ENCODE measurements at regions of chr13 and their contacts with region 1.

Region 1: GRCh38 chr13:40682449-40683240 is 16.2 kb upstream of the FOXO1 start:
- DNase-seq: no peak
- H3K4me3 ChIP-seq: no peak overlapping the region
- H3K27ac ChIP-seq: no peak overlapping the region
- H3K4me1 ChIP-seq: no peaks in the 10 kb centered on the region
- H3K27me3 ChIP-seq: no peaks in the 10 kb centered on the region
- CTCF ChIP-seq: peak; percentile 56

Region 2: DNA sequence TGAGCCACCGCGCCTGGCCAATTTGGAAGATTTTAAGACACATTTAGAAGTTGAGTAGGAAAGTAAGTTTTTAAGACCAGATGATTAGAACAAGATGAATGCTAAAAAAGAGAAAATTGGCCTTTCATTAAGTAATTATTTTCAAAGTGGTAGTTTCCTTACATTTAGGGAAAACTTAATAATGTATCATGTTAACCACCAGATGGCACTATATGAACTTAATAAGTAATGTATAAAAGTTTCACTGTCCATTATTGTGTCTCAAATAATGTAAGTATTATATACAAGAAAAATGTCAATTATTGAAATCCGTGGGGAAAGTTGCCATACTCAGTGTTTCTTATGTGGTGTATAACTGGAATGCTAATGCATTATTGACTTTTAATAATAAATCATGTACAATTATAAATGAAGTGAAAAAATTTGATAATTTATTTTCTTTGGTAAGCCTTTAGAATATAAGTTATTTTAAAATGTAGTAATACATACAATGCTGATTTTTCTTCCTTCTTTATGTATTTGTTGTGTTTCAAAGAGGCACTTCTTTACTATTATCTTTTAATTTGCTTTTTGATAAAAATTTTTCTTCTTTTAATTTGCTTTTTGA is 998.0 kb before region 1 on chr13:
- intact Hi-C with region 1: loop called (anchors 10 kb)
- DNase-seq: no peak
- H3K4me3 ChIP-seq: no peak overlapping the region
- H3K27ac ChIP-seq: no peak overlapping the region
- H3K4me1 ChIP-seq: no peaks in the 10 kb centered on the region
- H3K27me3 ChIP-seq: no peaks in the 10 kb centered on the region
- CTCF ChIP-seq: no peak

Region 3: DNA sequence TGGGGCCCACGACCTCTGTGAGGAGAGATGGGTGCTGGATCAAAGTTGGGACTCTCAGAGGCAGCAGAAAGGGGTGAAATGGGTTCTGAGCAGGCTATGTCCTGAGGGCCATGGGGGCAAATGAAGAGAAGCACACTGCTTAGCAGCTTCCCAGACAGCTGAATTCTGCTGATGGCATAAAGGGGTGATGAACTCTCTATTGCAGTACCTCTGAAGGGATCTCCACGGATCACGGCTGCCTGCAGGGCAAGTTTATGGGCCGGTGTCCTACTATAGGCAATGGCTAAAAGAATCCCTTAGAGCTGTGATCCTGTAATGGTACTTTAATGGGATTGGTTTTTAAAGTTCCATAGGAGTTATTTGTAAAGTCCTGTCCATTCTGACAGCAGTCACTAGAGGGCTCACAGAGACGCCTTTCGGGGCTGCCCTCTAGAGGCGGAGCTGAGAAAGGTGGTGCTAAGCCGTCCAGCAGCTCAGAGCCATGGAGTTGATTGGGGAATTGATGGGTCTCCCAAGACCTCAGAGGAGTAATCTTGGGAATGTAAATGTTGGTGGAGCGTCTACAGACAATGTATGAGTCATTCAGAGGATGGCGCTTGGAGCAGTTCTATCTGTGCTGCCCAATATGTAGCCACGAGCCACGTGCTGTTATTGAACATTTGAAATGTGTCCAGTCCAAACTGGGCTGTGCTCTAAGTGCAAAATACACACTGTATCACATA is 739.9 kb before region 1 on chr13:
- intact Hi-C with region 1: loop called (anchors 5 kb)
- DNase-seq: peak; percentile 59
- H3K4me3 ChIP-seq: no peak overlapping the region
- H3K27ac ChIP-seq: no peak overlapping the region
- H3K4me1 ChIP-seq: no peaks in the 10 kb centered on the region
- H3K27me3 ChIP-seq: no peaks in the 10 kb centered on the region
- CTCF ChIP-seq: peak; percentile 90

Region 4: DNA sequence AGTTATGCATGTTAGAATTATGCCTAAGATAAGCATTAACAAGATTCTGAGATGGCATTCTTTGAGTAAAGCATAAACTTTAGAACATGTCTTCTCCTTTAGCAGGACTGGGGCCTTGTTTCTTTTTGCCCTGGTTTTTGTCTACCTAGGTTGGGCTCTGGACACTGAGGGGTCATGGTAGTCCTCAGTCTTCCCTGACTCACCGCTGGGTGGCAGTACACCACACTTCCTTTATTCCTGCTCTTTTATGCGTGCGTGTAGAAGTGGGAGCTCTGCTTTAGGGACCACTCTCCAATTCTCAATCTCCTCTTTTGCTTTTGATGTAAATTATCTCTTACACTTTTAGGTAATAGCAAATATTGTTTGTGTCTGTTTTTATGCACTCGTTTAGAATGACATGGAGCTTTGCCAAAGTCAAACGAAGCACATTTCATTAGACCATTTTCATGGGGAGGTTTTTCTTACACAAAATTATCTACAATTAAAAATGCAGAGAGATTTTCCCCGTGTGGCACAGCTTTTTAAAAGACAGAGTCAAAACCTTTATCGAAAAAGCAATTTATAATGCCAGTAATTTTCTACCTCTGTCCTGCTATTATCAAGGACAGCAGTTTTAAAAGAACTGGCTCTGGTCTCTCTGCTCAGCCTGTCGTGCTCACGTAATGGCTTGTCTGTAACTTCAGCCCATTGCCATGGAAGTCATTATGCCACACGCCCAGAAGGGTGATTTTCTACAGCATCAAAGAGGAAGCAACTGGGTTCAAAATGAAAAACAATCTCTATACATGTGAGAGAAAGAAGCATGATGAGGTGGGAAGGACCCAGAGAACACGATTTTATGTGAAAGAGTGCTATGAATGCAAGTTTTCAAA is 613.2 kb before region 1 on chr13:
- intact Hi-C with region 1: loop called (anchors 2 kb)
- DNase-seq: peak; percentile 76
- H3K4me3 ChIP-seq: no peak overlapping the region
- H3K27ac ChIP-seq: no peak overlapping the region
- H3K4me1 ChIP-seq: no peaks in the 10 kb centered on the region
- H3K27me3 ChIP-seq: no peaks in the 10 kb centered on the region
- CTCF ChIP-seq: peak; percentile 74

Region 5: GRCh38 chr13:40344270-40345148 is 338.1 kb before region 1 on chr13:
- intact Hi-C with region 1: no loop called
- DNase-seq: no peak
- H3K4me3 ChIP-seq: no peak overlapping the region
- H3K27ac ChIP-seq: no peak overlapping the region
- H3K4me1 ChIP-seq: no peaks in the 10 kb centered on the region
- H3K27me3 ChIP-seq: no peaks in the 10 kb centered on the region
- CTCF ChIP-seq: no peak

Region 6: GRCh38 chr13:40564342-40565001 is 118.2 kb before region 1 on chr13:
- intact Hi-C with region 1: no loop called
- DNase-seq: no peak
- H3K4me3 ChIP-seq: no peak overlapping the region
- H3K27ac ChIP-seq: no peak overlapping the region
- H3K4me1 ChIP-seq: no peaks in the 10 kb centered on the region
- H3K27me3 ChIP-seq: no peaks in the 10 kb centered on the region
- CTCF ChIP-seq: no peak

Measured in colonic mucosa (tissue), 4 donors.